WTC11 (cell line): ENCODE measurements at regions of chr20 and their contacts with region 1.

Region 1: DNA sequence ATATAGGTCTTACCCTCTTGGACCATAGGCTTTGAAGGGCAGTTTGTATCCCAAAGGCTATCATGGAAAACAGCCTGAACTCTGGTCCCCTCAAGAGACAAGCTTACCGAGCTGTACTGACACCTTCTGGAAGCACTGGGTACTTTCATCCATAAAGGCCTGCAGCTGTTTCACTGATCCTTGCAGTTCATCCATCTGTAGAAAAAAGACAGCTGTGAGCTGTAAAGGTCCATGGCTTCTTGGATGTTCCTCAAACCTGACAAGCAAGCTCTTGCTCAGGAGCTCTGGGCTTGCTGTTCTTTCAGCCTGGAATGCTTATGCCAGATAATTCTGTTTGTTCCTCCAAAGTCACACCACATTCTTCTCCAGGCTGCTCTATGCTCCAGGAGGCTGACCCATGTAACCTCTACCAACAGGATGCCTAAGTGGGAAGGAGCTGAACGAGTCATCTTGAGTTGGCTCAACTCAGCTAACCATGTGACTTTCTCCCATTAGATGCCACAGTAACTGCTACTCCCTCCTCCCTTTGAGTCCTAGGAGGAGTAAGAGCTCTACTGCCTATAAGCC is 8.8 kb upstream of the NDRG3 start:
- DNase-seq: peak; percentile 54
- ATAC-seq: peak; percentile 95
- H3K4me3 Mint-ChIP-seq: no peak overlapping the region
- H3K27ac Mint-ChIP-seq: no peak overlapping the region
- H3K4me1 Mint-ChIP-seq: no peaks in the 10 kb centered on the region
- H3K27me3 Mint-ChIP-seq: no peaks in the 10 kb centered on the region
- CTCF ChIP-seq: peak; percentile 61; the same call in 1 of the 2 replicates

Region 2: GRCh38 chr20:36613974-36614373 is 140.8 kb before region 1 on chr20:
- CTCF ChIA-PET with region 1: interaction called, 16 read pairs
- POLR2A ChIA-PET with region 1: no interaction called
- DNase-seq: no peak
- ATAC-seq: no peak
- H3K4me3 Mint-ChIP-seq: no peak overlapping the region
- H3K27ac Mint-ChIP-seq: no peak overlapping the region
- H3K4me1 Mint-ChIP-seq: no peaks in the 10 kb centered on the region
- H3K27me3 Mint-ChIP-seq: no peaks in the 10 kb centered on the region
- CTCF ChIP-seq: no peak

Region 3: GRCh38 chr20:36728986-36729385 is 25.8 kb before region 1 on chr20:
- CTCF ChIA-PET with region 1: interaction called, 14 read pairs
- POLR2A ChIA-PET with region 1: no interaction called
- DNase-seq: no peak
- ATAC-seq: peak; percentile 86
- H3K4me3 Mint-ChIP-seq: no peak overlapping the region
- H3K27ac Mint-ChIP-seq: peak overlapping the region; percentile 34
- H3K4me1 Mint-ChIP-seq: peaks cover 13% of the 10 kb centered on the region
- H3K27me3 Mint-ChIP-seq: no peaks in the 10 kb centered on the region
- CTCF ChIP-seq: no peak

Region 4: DNA sequence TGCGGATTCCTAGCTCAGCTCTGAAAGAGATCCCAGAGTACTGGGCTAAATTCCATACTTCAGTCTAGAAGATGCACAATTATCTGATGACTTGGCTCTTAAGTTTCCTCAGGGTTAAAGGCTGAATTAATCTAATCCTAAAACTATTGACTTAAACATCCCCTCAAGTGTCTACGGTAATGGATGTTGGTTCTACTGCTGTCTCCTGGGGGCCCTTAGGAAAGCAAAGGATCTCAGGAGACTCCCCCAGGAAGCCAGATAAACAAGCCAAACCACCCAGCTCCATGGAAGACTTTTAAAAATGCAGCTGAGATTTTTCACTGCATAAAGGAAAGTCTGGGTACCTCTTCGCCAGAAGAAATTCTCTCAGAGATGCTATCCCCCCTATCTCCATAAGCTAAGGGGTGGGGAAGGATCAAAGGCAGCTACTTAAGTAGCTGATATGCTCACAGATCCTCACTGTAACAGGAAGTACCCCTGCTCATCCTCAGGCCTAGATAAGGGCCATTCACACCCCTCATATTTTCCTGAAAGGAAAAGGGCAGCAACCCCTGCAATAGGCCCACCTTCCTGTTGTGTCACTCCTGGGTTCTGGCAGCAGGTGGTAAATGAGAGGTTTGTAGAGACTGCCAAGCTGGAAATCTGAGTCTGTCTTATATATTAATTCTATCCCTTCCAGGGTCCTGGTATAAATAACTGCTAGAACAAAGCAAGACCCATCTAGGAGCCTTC is 18.1 kb before region 1 on chr20:
- CTCF ChIA-PET with region 1: interaction called, 14 read pairs
- POLR2A ChIA-PET with region 1: no interaction called
- DNase-seq: no peak
- ATAC-seq: no peak; the same call in 1 of the 2 replicates
- H3K4me3 Mint-ChIP-seq: no peak overlapping the region
- H3K27ac Mint-ChIP-seq: peak overlapping the region; percentile 53
- H3K4me1 Mint-ChIP-seq: peaks cover 28% of the 10 kb centered on the region
- H3K27me3 Mint-ChIP-seq: no peaks in the 10 kb centered on the region
- CTCF ChIP-seq: no peak

Region 5: DNA sequence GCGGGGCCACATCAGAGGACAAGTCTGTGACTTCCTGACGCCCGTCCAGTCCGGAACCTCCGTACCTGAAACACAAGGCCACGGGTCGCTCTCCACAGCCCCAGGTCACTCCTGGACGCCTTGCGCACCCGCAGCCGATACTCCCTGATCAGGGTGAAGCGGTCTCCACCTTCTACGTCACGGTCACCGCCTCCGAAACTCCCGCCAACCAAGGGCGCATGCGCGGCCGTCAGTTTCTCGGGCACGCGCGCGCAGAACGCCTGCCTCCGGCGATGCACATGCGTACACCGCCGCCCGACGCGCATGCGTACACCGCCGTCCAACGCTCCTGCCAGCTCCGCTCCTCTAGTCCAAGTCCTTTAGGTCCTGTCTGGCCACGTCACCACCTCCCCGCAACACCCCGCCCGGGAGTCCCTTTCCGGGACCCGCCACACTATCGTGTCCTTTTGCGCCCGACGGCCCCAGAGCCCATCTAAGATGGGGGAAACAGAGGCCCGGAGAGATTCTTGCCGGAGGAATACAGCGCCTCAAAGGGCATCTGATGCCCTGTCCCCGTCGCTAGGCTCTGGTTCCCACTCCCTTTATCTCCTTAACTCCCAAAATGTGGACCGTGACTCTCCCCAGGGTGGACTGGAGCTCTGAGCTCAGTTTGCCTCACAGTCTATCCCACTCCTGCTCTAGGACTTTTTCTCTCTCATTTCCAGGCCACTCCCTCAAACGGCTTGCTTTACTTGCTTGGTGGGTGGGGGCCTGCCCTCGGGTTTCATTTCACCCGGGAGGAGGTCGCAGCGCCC is 19.1 kb after region 1 on chr20 and contains the start of gene DSN1:
- CTCF ChIA-PET with region 1: interaction called, 20 read pairs
- POLR2A ChIA-PET with region 1: interaction called, 3 read pairs
- DNase-seq: peak; percentile 99
- ATAC-seq: peak; percentile 80
- H3K4me3 Mint-ChIP-seq: peak within 1 kb of the TSS; percentile 90
- H3K27ac Mint-ChIP-seq: peak within 1 kb of the TSS; percentile 100
- H3K4me1 Mint-ChIP-seq: peaks cover 7% of the 10 kb centered on the region
- H3K27me3 Mint-ChIP-seq: peaks cover 2% of the 10 kb centered on the region; the same call in 1 of the 2 replicates
- CTCF ChIP-seq: no peak
- total RNA-seq, gene DSN1: 26.0 to 27.0 TPM (median 26.9 TPM) in 3 replicates